CD8-positive, alpha-beta T cell (primary cell): ENCODE measurements at regions of chr1 and their contacts with region 1.

Region 1: GRCh38 chr1:84620720-84621313 is 46.6 kb upstream of the CTBS start:
- DNase-seq: peak; percentile 63 to 91 (median 77)
- ATAC-seq: peak; percentile 91
- H3K4me3 ChIP-seq: peak overlapping the region; percentile 62 to 93
- H3K4me3 Mint-ChIP-seq: peak overlapping the region; percentile 91
- H3K27ac ChIP-seq: peak overlapping the region in 1 of 2 experiments; percentile 35
- H3K27ac Mint-ChIP-seq: peak overlapping the region; percentile 14
- H3K4me1 ChIP-seq: peaks cover 4% of the 10 kb centered on the region
- H3K4me1 Mint-ChIP-seq: peaks cover 2% of the 10 kb centered on the region
- H3K27me3 ChIP-seq: no peaks in the 10 kb centered on the region
- H3K27me3 Mint-ChIP-seq: peaks cover 5% of the 10 kb centered on the region
- CTCF ChIP-seq: peak; percentile 100

Region 2: DNA sequence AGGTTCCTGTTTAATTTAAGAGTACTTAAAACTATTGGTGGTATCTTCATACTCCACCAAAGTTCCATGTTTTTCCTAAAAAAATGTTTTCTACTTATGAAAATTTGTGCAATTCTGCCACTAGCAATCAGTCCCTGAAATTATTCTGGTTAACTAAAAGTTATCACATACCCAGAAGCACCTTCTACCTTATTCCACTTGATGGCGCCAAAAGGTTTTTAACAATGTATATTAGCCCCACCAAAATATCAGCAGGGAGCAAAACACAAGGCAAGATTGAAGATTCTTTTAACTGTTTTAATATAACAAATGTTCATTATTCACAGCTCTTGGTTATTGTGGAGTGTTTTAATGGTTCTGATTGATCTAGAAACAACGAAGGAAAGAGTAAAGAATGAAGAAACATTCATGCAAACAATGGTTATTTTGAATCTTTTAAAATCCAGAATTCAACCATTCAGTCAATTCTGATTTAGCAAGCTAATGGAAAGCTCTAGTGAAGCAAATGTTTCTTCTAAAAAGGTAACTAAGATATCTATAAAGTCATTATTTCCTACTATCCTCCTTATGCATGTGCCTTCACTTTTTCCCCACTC is 689.1 kb before region 1 on chr1:
- CTCF ChIA-PET with region 1: no interaction called
- POLR2A ChIA-PET with region 1: no interaction called
- intact Hi-C with region 1: loop called (anchors 5 to 10 kb)
- DNase-seq: peak in 3 of 9 experiments; percentile 11 to 69 (median 58)
- ATAC-seq: peak; percentile 69
- H3K4me3 ChIP-seq: no peak overlapping the region
- H3K4me3 Mint-ChIP-seq: no peak overlapping the region
- H3K27ac ChIP-seq: no peak overlapping the region
- H3K27ac Mint-ChIP-seq: no peak overlapping the region
- H3K4me1 ChIP-seq: no peaks in the 10 kb centered on the region
- H3K4me1 Mint-ChIP-seq: no peaks in the 10 kb centered on the region
- H3K27me3 ChIP-seq: no peaks in the 10 kb centered on the region
- H3K27me3 Mint-ChIP-seq: peaks cover 7% of the 10 kb centered on the region
- CTCF ChIP-seq: peak; percentile 86

Region 3: DNA sequence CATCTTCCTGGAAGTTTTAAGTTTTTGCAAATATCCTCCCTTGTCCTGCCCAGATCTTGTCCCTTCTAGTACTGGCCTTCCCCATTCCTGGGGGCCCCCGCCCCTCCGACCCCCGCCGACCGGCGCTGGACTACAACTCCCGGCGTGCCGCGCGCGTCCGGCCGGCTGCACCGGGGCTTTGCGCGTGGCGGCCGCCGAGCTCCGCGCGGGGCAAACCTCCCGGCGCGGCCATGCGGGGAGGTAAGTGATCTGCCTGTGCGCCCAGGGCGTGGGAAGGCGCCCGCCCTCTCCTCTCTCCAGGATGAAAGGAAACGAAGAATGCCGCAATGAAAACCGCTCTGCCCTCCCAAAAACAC is 322.5 kb before region 1 on chr1:
- CTCF ChIA-PET with region 1: no interaction called
- POLR2A ChIA-PET with region 1: no interaction called
- intact Hi-C with region 1: loop called (anchors 5 to 10 kb)
- DNase-seq: peak; percentile 12 to 75 (median 41)
- ATAC-seq: peak; percentile 70
- H3K4me3 ChIP-seq: peak overlapping the region; percentile 76 to 94
- H3K4me3 Mint-ChIP-seq: peak overlapping the region; percentile 78
- H3K27ac ChIP-seq: peak overlapping the region; percentile 8 to 53
- H3K27ac Mint-ChIP-seq: peak overlapping the region; percentile 46
- H3K4me1 ChIP-seq: peaks cover 17% of the 10 kb centered on the region
- H3K4me1 Mint-ChIP-seq: peaks cover 37% of the 10 kb centered on the region
- H3K27me3 ChIP-seq: no peaks in the 10 kb centered on the region
- H3K27me3 Mint-ChIP-seq: peaks cover 5% of the 10 kb centered on the region
- CTCF ChIP-seq: no peak

Region 4: DNA sequence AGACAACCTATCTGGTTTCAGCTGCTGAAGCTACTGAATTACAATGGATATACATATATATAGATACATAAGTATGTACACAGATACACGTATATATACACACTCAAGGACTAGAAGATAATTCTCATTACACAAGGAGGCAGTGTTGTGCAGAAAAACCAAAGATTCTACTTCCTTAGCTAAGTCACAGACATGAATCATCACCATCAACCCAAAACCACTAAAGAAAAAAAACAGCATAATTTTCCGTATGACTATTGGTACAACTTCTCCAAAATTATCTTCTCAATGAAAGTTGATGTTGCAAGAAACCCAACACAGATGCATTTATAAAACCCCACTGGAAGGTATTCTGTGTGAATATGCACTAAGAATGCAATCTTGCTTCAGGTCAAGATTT is 178.6 kb before region 1 on chr1:
- CTCF ChIA-PET with region 1: interaction called, 44 read pairs
- POLR2A ChIA-PET with region 1: no interaction called
- intact Hi-C with region 1: loop called (anchors 1 kb)
- DNase-seq: peak in 3 of 9 experiments; percentile 10 to 90 (median 83)
- ATAC-seq: peak; percentile 96
- H3K4me3 ChIP-seq: no peak overlapping the region
- H3K4me3 Mint-ChIP-seq: no peak overlapping the region
- H3K27ac ChIP-seq: no peak overlapping the region
- H3K27ac Mint-ChIP-seq: no peak overlapping the region
- H3K4me1 ChIP-seq: peaks cover 20% of the 10 kb centered on the region
- H3K4me1 Mint-ChIP-seq: peaks cover 15% of the 10 kb centered on the region
- H3K27me3 ChIP-seq: no peaks in the 10 kb centered on the region
- H3K27me3 Mint-ChIP-seq: peaks cover 4% of the 10 kb centered on the region
- CTCF ChIP-seq: peak; percentile 53

Region 5: DNA sequence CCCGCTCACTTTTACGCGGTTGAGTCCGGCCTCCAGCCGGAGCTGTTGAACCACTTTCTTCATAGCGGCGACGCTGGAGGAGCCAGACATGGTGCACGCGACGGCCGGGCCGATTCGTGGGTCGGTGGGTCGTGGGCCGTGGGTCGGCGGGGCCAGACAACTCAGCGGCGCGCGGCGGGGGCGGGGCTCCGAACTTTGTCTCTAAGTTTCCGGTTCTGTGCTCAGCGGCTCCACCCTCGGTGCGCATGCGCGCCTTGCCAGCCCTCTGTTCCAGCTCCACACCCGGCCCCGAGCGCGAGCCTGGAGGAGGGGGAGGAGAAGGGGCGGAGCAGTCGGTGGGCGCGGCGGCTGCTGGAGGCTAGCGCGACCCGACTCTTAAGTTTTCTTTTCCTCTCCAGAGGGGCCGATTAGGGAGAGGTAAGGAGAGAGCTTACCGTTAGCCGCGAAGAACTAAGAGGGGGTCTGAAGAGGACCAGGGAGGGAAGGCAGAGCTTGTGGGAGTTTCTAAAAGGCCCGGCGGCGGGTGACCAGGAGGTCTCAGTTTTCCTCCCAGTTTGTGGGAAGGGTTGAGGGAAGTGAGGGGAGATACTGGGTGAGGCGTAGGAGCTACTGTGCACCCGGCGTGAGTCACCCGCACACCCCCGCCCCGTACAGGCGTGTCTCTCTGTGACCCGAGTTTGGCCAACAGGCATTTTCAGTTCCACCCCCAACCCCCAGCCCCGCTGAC is 114.7 kb before region 1 on chr1 and contains the starts of genes GNG5 and SPATA1:
- CTCF ChIA-PET with region 1: interaction called, 3 read pairs
- POLR2A ChIA-PET with region 1: no interaction called
- intact Hi-C with region 1: loop called (anchors 2 to 5 kb)
- DNase-seq: peak; percentile 91 to 98 (median 98)
- ATAC-seq: peak; percentile 89
- H3K4me3 ChIP-seq: peak within 1 kb of the TSS; percentile 87 to 95
- H3K4me3 Mint-ChIP-seq: peak within 1 kb of the TSS; percentile 94
- H3K27ac ChIP-seq: peak within 1 kb of the TSS; percentile 75 to 88
- H3K27ac Mint-ChIP-seq: peak within 1 kb of the TSS; percentile 96
- H3K4me1 ChIP-seq: peaks cover 40% of the 10 kb centered on the region
- H3K4me1 Mint-ChIP-seq: peaks cover 45% of the 10 kb centered on the region
- H3K27me3 ChIP-seq: no peaks in the 10 kb centered on the region
- H3K27me3 Mint-ChIP-seq: no peaks in the 10 kb centered on the region
- CTCF ChIP-seq: no peak
- total RNA-seq, gene GNG5: 19.5 TPM
- total RNA-seq, gene SPATA1: 0.52 to 0.94 TPM

Region 6: GRCh38 chr1:84585803-84586202 is 35.0 kb before region 1 on chr1:
- CTCF ChIA-PET with region 1: interaction called, 4 read pairs
- POLR2A ChIA-PET with region 1: no interaction called
- intact Hi-C with region 1: loop called in 1 of 2 experiments (anchors 1 kb)
- DNase-seq: no peak
- ATAC-seq: no peak
- H3K4me3 ChIP-seq: no peak overlapping the region
- H3K4me3 Mint-ChIP-seq: no peak overlapping the region
- H3K27ac ChIP-seq: no peak overlapping the region
- H3K27ac Mint-ChIP-seq: no peak overlapping the region
- H3K4me1 ChIP-seq: no peaks in the 10 kb centered on the region
- H3K4me1 Mint-ChIP-seq: no peaks in the 10 kb centered on the region
- H3K27me3 ChIP-seq: no peaks in the 10 kb centered on the region
- H3K27me3 Mint-ChIP-seq: peaks cover 25% of the 10 kb centered on the region
- CTCF ChIP-seq: no peak

Region 7: GRCh38 chr1:84772428-84772943 is 151.7 kb after region 1 on chr1:
- CTCF ChIA-PET with region 1: no interaction called
- POLR2A ChIA-PET with region 1: no interaction called
- intact Hi-C with region 1: loop called in 1 of 2 experiments (anchors 2 kb)
- DNase-seq: peak; percentile 25 to 88 (median 66)
- ATAC-seq: peak; percentile 73
- H3K4me3 ChIP-seq: no peak overlapping the region
- H3K4me3 Mint-ChIP-seq: no peak overlapping the region
- H3K27ac ChIP-seq: no peak overlapping the region
- H3K27ac Mint-ChIP-seq: no peak overlapping the region
- H3K4me1 ChIP-seq: no peaks in the 10 kb centered on the region
- H3K4me1 Mint-ChIP-seq: peaks cover 3% of the 10 kb centered on the region
- H3K27me3 ChIP-seq: no peaks in the 10 kb centered on the region
- H3K27me3 Mint-ChIP-seq: peaks cover 3% of the 10 kb centered on the region
- CTCF ChIP-seq: peak; percentile 95